Activated B cell treated with CpG ODN at 0.5 μM for 24 hours (primary cell): ENCODE measurements at regions of chr2 and their contacts with region 1.

Region 1: DNA sequence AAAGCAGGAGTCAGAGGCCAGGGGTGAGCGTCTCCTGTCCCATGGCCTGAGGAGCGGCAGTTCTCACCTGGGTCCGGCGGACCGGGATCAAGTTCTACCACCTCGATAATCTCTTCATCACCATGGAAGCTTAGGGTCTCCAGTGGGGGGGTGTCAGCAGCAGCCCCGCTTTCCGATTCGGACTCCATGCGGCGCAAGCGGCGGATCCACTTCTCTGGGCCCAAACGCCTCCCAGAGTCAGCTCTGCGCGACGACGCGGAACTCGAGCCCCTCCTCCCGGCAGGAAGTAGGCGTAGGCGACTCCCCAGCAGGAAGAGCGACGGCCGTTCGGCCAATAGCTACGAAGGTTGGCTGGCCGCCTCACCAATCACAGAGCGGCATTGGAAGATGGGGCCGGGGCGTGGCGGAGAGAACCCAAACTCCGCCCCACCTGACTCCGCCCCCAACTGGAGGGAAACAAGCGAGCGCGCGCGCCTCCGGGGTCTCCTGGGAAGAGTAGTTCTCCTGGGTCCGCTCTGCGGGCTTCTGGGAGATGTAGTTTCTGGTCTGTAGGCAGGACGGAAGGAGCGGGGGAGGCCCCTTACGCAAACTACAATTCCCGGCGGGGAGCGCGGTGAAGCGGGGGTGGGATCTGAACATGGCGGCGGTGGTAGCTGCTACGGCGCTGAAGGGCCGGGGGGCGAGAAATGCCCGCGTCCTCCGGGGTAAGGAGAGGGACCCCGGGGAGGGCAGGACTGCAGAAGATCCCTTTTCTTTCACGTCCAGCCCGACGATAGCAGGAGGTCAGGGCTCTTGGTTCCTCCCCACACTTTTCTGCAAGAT is at the starts of genes AAMP and PNKD:
- DNase-seq: peak; percentile 100
- ATAC-seq: peak; percentile 83
- H3K4me3 Mint-ChIP-seq: peak within 1 kb of the TSS; percentile 93
- H3K27ac Mint-ChIP-seq: peak within 1 kb of the TSS; percentile 88
- H3K4me1 Mint-ChIP-seq: peaks cover 67% of the 10 kb centered on the region
- H3K27me3 Mint-ChIP-seq: no peaks in the 10 kb centered on the region
- CTCF ChIP-seq: no peak
- total RNA-seq, gene AAMP: 63.4 and 63.6 TPM in 2 replicates
- total RNA-seq, gene PNKD: 21.0 and 23.7 TPM in 2 replicates

Region 2: GRCh38 chr2:218186355-218186766 is 83.7 kb before region 1 on chr2:
- CTCF ChIA-PET with region 1: no interaction called
- POLR2A ChIA-PET with region 1: no interaction called
- intact Hi-C with region 1: loop called (anchors 1 kb)
- DNase-seq: peak; percentile 43
- ATAC-seq: peak; percentile 99
- H3K4me3 Mint-ChIP-seq: no peak overlapping the region
- H3K27ac Mint-ChIP-seq: no peak overlapping the region
- H3K4me1 Mint-ChIP-seq: peaks cover 7% of the 10 kb centered on the region
- H3K27me3 Mint-ChIP-seq: peaks cover 1% of the 10 kb centered on the region
- CTCF ChIP-seq: peak; percentile 3

Region 3: GRCh38 chr2:218286570-218287459 is 16.7 kb after region 1 on chr2:
- CTCF ChIA-PET with region 1: interaction called, 138 read pairs
- POLR2A ChIA-PET with region 1: interaction called, 97 read pairs
- intact Hi-C with region 1: loop called (anchors 1 kb)
- DNase-seq: peak; percentile 63
- ATAC-seq: peak; percentile 73
- H3K4me3 Mint-ChIP-seq: peak overlapping the region; percentile 77
- H3K27ac Mint-ChIP-seq: peak overlapping the region; percentile 94
- H3K4me1 Mint-ChIP-seq: peaks cover 91% of the 10 kb centered on the region
- H3K27me3 Mint-ChIP-seq: no peaks in the 10 kb centered on the region
- CTCF ChIP-seq: no peak

Region 4: DNA sequence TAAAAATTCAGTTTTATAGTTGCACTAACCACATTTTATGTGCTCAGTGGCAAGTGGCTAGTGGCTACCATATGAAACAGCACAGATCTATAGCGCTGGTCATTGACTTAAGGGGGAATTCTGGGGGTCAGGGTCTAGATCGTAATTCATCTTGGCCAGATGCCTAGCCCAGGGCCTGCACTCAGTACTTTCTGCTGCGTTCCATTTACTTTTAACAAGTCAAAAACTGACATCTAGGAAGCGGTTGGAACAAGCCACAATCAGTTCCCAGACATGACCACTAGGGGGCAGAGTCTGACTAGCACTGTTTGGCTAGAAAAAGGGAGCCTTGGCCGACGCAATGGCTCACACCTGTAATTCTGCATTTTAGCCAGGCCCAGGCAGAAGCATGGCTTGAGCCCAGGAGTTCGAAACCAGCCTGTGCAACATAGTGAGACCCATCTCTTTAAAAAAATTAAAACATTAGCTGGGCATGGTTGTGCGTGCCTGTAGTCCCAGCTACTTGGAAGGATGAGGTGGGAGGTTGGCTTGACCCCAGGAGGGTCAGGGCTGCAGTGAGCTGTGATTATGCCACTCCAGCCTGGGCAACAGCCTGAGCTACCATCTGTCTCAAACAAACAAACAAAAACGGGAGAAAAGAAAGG is 31.2 kb after region 1 on chr2:
- CTCF ChIA-PET with region 1: interaction called, 8 read pairs
- POLR2A ChIA-PET with region 1: no interaction called
- intact Hi-C with region 1: loop called (anchors 1 kb)
- DNase-seq: peak; percentile 61
- ATAC-seq: peak; percentile 99
- H3K4me3 Mint-ChIP-seq: no peak overlapping the region
- H3K27ac Mint-ChIP-seq: peak overlapping the region; percentile 53
- H3K4me1 Mint-ChIP-seq: peaks cover 8% of the 10 kb centered on the region
- H3K27me3 Mint-ChIP-seq: no peaks in the 10 kb centered on the region
- CTCF ChIP-seq: no peak

Region 5: DNA sequence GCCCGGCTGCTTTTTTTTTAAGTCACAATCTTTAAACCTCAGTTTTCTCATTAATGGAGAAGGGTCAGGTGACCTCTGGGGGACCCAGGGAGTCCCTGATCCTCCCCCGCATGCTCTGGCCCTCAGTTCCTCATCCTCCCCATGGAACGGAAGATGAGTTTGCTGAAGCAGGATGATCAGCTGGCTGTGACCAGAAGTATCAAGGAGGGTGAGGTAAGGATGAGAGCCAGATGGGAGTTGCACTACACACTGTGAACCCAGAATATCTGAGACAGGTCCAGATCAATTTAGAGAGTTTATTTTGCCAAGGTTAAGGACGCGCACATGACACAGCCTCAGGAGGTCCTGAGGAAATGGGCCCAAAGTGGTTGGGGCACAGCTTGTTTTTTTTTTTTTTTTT is 90.3 kb after region 1 on chr2:
- CTCF ChIA-PET with region 1: interaction called, 73 read pairs
- POLR2A ChIA-PET with region 1: interaction called, 12 read pairs
- intact Hi-C with region 1: loop called (anchors 1 kb)
- DNase-seq: no peak
- ATAC-seq: no peak
- H3K4me3 Mint-ChIP-seq: no peak overlapping the region
- H3K27ac Mint-ChIP-seq: peak overlapping the region; percentile 25
- H3K4me1 Mint-ChIP-seq: peaks cover 11% of the 10 kb centered on the region
- H3K27me3 Mint-ChIP-seq: no peaks in the 10 kb centered on the region
- CTCF ChIP-seq: no peak

Region 6: DNA sequence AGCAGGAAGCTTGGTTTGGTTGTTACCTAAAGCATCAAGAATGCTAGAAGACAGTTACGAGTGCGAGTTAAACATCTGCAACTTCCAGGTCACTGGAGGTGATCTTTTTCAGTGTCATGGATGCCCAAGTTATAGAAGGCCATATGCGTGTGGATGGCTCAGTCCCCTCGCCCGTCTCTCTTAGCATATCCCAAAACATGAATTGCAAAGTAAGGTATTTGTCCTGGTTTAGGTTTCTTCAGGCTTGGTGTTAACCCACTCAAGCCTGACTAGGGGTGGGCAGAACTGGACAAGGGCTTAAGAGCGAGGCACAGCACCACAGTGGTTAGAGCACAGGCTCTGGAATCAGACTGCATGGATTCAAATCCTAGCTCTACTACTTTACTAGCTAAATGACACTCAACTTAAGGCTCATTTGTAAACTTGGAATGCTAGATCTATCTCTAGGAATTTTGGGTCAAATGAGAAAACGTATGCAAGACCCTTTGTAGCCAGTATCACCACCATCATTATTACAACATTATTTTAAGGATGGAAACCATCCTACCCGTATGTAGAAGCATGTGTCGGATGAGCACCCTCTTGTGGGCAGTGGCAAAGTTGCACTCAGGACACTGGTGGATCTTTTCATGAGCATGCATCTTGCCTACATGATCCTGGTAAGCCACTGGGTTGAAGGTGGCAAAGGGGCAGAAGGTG is 378.1 kb after region 1 on chr2:
- CTCF ChIA-PET with region 1: no interaction called
- POLR2A ChIA-PET with region 1: no interaction called
- intact Hi-C with region 1: loop called (anchors 1 kb)
- DNase-seq: peak; percentile 36
- ATAC-seq: peak; percentile 88
- H3K4me3 Mint-ChIP-seq: no peak overlapping the region
- H3K27ac Mint-ChIP-seq: no peak overlapping the region
- H3K4me1 Mint-ChIP-seq: no peaks in the 10 kb centered on the region
- H3K27me3 Mint-ChIP-seq: no peaks in the 10 kb centered on the region
- CTCF ChIP-seq: no peak

Region 7: GRCh38 chr2:218710687-218711549 is 440.8 kb after region 1 on chr2 and contains the start of gene TTLL4:
- CTCF ChIA-PET with region 1: no interaction called
- POLR2A ChIA-PET with region 1: no interaction called
- intact Hi-C with region 1: loop called (anchors 1 kb)
- DNase-seq: peak; percentile 98
- ATAC-seq: peak; percentile 97
- H3K4me3 Mint-ChIP-seq: peak within 1 kb of the TSS; percentile 91
- H3K27ac Mint-ChIP-seq: peak within 1 kb of the TSS; percentile 86
- H3K4me1 Mint-ChIP-seq: peaks cover 26% of the 10 kb centered on the region
- H3K27me3 Mint-ChIP-seq: no peaks in the 10 kb centered on the region
- CTCF ChIP-seq: no peak
- total RNA-seq, gene TTLL4: 36.0 and 37.2 TPM in 2 replicates